GM12878 (cell line): ENCODE measurements at regions of chr13 and their contacts with region 1.

Region 1: DNA sequence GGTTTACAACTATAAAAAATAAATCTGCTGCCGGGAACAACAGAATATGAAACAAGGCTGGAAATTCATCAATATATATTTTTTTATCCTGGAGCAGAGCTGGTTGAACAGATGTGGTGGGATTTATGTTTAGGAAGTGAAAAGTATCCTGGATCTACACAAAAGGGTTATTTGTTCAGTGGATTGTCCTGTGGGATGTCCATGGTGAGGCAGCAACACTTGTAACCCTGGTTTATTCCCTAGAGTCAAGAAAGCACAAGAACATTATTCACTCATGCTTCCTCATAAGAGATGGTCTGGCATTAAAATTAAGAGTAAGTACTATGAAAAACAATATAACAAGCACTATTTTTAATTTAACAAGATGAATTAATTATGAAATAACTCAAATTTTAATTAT is 46.0 kb downstream of the PRR20E start:
- DNase-seq: no peak
- ATAC-seq: no peak
- H3K4me3 ChIP-seq: no peak overlapping the region
- H3K27ac ChIP-seq: no peak overlapping the region
- H3K4me1 ChIP-seq: no peaks in the 10 kb centered on the region
- H3K27me3 ChIP-seq: no peaks in the 10 kb centered on the region
- CTCF ChIP-seq: no peak
- EP300 ChIP-seq: no peak
- POLR2A ChIP-seq: no peak
- RAD21 ChIP-seq: no peak

Region 2: DNA sequence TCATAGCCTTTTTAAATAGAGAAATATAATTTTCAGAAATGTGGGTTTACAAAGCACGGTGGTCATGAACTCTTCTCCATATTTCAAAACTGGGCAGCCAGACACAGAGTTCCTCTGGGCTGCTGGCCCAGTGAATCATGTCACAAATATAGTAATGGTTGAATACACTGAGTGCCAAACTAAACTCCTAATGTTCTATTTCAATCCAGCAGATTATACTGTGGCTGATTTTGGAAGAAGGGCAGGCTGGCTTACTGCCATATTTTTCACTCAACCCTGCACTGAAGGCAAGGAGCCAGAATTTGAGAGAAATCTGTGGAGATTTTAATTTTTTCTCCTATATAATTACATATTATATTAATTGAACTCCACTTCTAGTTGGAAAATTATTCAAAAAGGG is 89.3 kb before region 1 on chr13:
- CTCF ChIA-PET with region 1: no interaction called
- POLR2A ChIA-PET with region 1: no interaction called
- RAD21 ChIA-PET with region 1: no interaction called
- SMC1A ChIA-PET with region 1: no interaction called
- in situ Hi-C with region 1: loop called (anchors 25 kb)
- intact Hi-C with region 1: no loop called
- DNase-seq: no peak
- ATAC-seq: no peak
- H3K4me3 ChIP-seq: no peak overlapping the region
- H3K27ac ChIP-seq: no peak overlapping the region
- H3K4me1 ChIP-seq: no peaks in the 10 kb centered on the region
- H3K27me3 ChIP-seq: no peaks in the 10 kb centered on the region
- CTCF ChIP-seq: no peak
- EP300 ChIP-seq: no peak
- POLR2A ChIP-seq: no peak
- RAD21 ChIP-seq: no peak